ENCODE measurements at regions of chr4 and their contacts with region 1.

Region 1: GRCh38 chr4:26860157-26860921 is at the start of gene STIM2:
- DNase-seq: peak; percentile 97 to 98
- H3K4me3 ChIP-seq: peak within 1 kb of the TSS; percentile 74
- H3K4me3 Mint-ChIP-seq: peak within 1 kb of the TSS; percentile 80
- H3K27ac Mint-ChIP-seq: peak within 1 kb of the TSS; percentile 85
- H3K4me1 ChIP-seq: peaks cover 11% of the 10 kb centered on the region
- H3K4me1 Mint-ChIP-seq: peaks cover 19% of the 10 kb centered on the region
- H3K27me3 ChIP-seq: no peaks in the 10 kb centered on the region
- H3K27me3 Mint-ChIP-seq: no peaks in the 10 kb centered on the region
- CTCF ChIP-seq: peak; percentile 20 to 43
- total RNA-seq, gene STIM2: 27.2 and 28.5 TPM in 2 replicates

Region 2: DNA sequence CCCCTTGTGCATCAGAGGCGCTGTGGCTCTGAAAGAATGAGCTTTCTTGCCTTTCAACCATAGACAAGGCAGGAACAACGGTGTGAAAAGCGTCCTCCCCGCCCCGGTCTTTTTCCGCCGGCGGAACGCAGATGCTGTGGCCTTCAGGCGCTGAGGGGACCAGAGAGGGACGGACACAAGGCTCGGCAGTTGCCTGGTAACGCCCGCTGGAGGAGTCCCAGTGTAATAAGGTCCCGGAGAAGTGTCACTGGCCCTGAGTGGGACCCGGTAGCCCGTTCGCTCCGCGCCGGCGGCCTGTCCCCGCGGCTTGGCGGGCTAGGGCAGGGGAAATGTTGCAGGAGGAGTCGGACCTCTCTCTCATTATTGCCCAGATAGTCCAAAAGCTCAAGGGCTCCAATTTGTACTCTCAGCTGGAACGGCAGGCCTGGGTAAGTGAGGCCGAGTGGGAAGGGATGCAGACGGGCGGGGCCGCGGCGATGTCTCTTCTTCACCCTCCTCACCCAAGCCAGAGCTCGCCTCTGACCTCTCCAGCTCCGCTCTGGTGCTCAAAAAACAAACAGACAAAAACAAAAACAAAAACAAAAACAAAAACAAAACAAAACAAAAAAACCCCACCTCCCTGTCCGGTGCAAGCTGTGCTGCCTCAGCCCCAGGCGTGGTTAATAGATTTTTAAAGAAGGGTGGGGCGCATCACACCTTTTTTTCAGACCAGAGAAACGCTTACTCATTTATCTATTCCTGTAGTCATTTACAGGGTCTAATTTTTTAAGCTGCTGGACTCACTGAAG is 276.3 kb before region 1 on chr4 and contains the start of gene TBC1D19:
- CTCF ChIA-PET with region 1: no interaction called
- POLR2A ChIA-PET with region 1: interaction called, 3 read pairs
- intact Hi-C with region 1: loop called (anchors 10 kb)
- DNase-seq: peak; percentile 89 to 90
- H3K4me3 ChIP-seq: peak within 1 kb of the TSS; percentile 61
- H3K4me3 Mint-ChIP-seq: peak within 1 kb of the TSS; percentile 75
- H3K27ac Mint-ChIP-seq: peak within 1 kb of the TSS; percentile 73
- H3K4me1 ChIP-seq: no peaks in the 10 kb centered on the region
- H3K4me1 Mint-ChIP-seq: peaks cover 7% of the 10 kb centered on the region
- H3K27me3 ChIP-seq: no peaks in the 10 kb centered on the region
- H3K27me3 Mint-ChIP-seq: no peaks in the 10 kb centered on the region
- CTCF ChIP-seq: no peak
- total RNA-seq, gene TBC1D19: 13.8 and 19.1 TPM in 2 replicates

Region 3: GRCh38 chr4:26779674-26780073 is 80.7 kb before region 1 on chr4:
- CTCF ChIA-PET with region 1: no interaction called
- POLR2A ChIA-PET with region 1: no interaction called
- intact Hi-C with region 1: no loop called
- DNase-seq: no peak
- H3K4me3 ChIP-seq: no peak overlapping the region
- H3K4me3 Mint-ChIP-seq: no peak overlapping the region
- H3K27ac Mint-ChIP-seq: no peak overlapping the region
- H3K4me1 ChIP-seq: no peaks in the 10 kb centered on the region
- H3K4me1 Mint-ChIP-seq: no peaks in the 10 kb centered on the region
- H3K27me3 ChIP-seq: no peaks in the 10 kb centered on the region
- H3K27me3 Mint-ChIP-seq: no peaks in the 10 kb centered on the region
- CTCF ChIP-seq: no peak

Region 4: DNA sequence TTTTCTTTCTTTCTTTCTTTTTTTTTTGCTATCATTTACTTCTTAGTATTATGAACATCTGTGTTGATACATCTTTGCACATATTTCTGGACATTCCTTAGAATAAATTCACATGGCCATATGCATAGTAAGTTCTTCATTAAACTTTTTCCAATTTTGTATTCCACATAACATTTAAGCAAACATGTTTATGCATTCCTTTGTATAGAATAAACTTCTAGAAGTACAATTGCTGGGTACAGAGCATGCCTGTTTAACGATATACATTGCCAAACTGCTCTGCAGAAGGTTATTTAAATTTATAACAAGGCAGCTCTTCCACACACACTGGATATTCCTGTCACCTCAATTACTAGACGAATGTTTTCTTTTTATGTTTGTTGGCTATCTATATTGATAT is 35.7 kb before region 1 on chr4:
- CTCF ChIA-PET with region 1: no interaction called
- POLR2A ChIA-PET with region 1: no interaction called
- intact Hi-C with region 1: loop called (anchors 1 kb)
- DNase-seq: no peak
- H3K4me3 ChIP-seq: no peak overlapping the region
- H3K4me3 Mint-ChIP-seq: no peak overlapping the region
- H3K27ac Mint-ChIP-seq: no peak overlapping the region
- H3K4me1 ChIP-seq: peaks cover 11% of the 10 kb centered on the region
- H3K4me1 Mint-ChIP-seq: peaks cover 9% of the 10 kb centered on the region
- H3K27me3 ChIP-seq: no peaks in the 10 kb centered on the region
- H3K27me3 Mint-ChIP-seq: no peaks in the 10 kb centered on the region
- CTCF ChIP-seq: no peak

Region 5: DNA sequence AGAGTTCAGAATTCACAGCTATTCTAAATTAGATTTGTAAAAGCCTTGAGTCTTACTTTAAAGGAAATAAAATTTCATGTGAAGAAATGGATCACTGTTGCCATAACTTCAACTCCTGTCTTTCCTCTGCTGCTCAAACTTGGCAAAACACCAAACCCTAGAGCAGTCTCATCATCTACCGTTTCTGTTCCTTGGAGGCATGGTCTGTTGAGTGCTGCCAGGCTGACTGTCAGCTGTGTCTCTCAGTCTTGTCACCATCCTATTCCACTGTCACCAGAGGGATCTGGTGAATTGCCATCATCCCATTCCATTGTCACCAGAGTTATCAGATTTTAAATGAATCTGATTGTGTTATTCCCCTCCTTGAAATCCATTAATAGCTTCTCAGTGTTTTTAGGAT is 55.9 kb after region 1 on chr4:
- CTCF ChIA-PET with region 1: no interaction called
- POLR2A ChIA-PET with region 1: no interaction called
- intact Hi-C with region 1: no loop called
- DNase-seq: no peak
- H3K4me3 ChIP-seq: no peak overlapping the region
- H3K4me3 Mint-ChIP-seq: no peak overlapping the region
- H3K27ac Mint-ChIP-seq: no peak overlapping the region
- H3K4me1 ChIP-seq: no peaks in the 10 kb centered on the region
- H3K4me1 Mint-ChIP-seq: no peaks in the 10 kb centered on the region
- H3K27me3 ChIP-seq: no peaks in the 10 kb centered on the region
- H3K27me3 Mint-ChIP-seq: no peaks in the 10 kb centered on the region
- CTCF ChIP-seq: no peak

Region 6: GRCh38 chr4:27003642-27004113 is 143.3 kb after region 1 on chr4:
- CTCF ChIA-PET with region 1: no interaction called
- POLR2A ChIA-PET with region 1: no interaction called
- intact Hi-C with region 1: loop called (anchors 2 kb)
- DNase-seq: no peak
- H3K4me3 ChIP-seq: no peak overlapping the region
- H3K4me3 Mint-ChIP-seq: no peak overlapping the region
- H3K27ac Mint-ChIP-seq: no peak overlapping the region
- H3K4me1 ChIP-seq: no peaks in the 10 kb centered on the region
- H3K4me1 Mint-ChIP-seq: no peaks in the 10 kb centered on the region
- H3K27me3 ChIP-seq: no peaks in the 10 kb centered on the region
- H3K27me3 Mint-ChIP-seq: no peaks in the 10 kb centered on the region
- CTCF ChIP-seq: no peak

Measured in Caco-2 (cell line).